Heart left ventricle (tissue), 16 donors: ENCODE measurements at regions of chr19 and their contacts with region 1.

Region 1: DNA sequence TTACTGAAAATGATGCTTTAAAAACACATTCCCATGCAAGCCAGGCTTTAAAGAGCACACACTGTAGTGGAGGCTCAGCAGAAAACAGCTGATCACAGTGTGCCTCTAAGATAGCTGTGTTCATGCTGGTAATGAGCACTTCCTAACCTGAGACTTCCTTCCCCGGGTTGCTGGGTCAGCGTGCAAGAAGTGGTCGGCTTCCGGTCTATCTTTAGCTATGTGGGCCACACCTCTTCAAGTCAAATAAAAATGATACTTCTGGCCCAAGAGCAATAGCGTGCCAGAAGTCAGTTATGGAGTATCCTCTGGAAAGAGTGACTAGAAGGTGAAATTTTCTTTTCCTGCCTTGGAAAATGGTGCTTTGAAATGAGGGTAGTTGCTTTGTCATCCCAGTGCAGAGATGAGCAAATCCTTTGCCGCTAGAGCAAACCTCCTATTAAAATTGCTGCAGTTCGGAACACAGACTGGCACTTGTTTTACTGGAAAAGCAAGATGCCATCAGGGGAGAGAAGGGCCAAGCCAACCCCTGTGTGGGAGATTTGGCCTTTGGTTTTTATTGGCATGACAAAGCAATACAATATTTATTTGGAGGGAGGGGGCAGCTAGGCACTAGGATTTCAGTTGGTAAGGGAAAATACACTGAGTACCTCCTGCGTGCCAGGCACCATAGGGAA is 64.2 kb downstream of the ARHGAP35 start:
- DNase-seq: peak in 3 of 5 donors; percentile 24 to 43 (median 42)
- ATAC-seq: peak in 3 of 4 donors; percentile 49 to 85 (median 73)
- H3K4me3 ChIP-seq: no peak overlapping the region
- H3K27ac ChIP-seq: peak overlapping the region in 11 of 12 donors; percentile 11 to 72 (median 56)
- H3K4me1 ChIP-seq: peaks cover 16 to 66% (median 53%) of the 10 kb centered on the region in 12 donors
- H3K27me3 ChIP-seq: no peaks in the 10 kb centered on the region
- CTCF ChIP-seq: no peak
- POLR2A ChIP-seq: no peak

Region 2: GRCh38 chr19:46661020-46661731 is 263.8 kb before region 1 on chr19 and contains the start of gene DACT3:
- intact Hi-C with region 1: no loop called
- DNase-seq: peak; percentile 100
- ATAC-seq: peak; percentile 96 to 97 (median 96)
- H3K4me3 ChIP-seq: peak within 1 kb of the TSS; percentile 46 to 79 (median 70)
- H3K27ac ChIP-seq: peak within 1 kb of the TSS; percentile 5 to 94 (median 72)
- H3K4me1 ChIP-seq: peaks cover 0 to 32% (median 21%) of the 10 kb centered on the region in 12 donors
- H3K27me3 ChIP-seq: peaks cover 0 to 24% (median 0%) of the 10 kb centered on the region in 9 donors
- CTCF ChIP-seq: peak in 3 of 12 donors; percentile 10 to 34 (median 16)
- POLR2A ChIP-seq: peak in 1 of 2 donors; percentile 25
- total RNA-seq, gene DACT3: 8.8 to 23.4 (median 15.1) TPM

Region 3: GRCh38 chr19:46904114-46905060 is 20.6 kb before region 1 on chr19:
- intact Hi-C with region 1: no loop called
- DNase-seq: peak in 4 of 5 donors; percentile 45 to 75 (median 59)
- ATAC-seq: peak in 3 of 4 donors; percentile 65 to 71 (median 66)
- H3K4me3 ChIP-seq: no peak overlapping the region
- H3K27ac ChIP-seq: peak overlapping the region in 11 of 12 donors; percentile 31 to 66 (median 48)
- H3K4me1 ChIP-seq: peaks cover 9 to 81% (median 53%) of the 10 kb centered on the region in 12 donors
- H3K27me3 ChIP-seq: no peaks in the 10 kb centered on the region
- CTCF ChIP-seq: no peak
- POLR2A ChIP-seq: no peak

Region 4: DNA sequence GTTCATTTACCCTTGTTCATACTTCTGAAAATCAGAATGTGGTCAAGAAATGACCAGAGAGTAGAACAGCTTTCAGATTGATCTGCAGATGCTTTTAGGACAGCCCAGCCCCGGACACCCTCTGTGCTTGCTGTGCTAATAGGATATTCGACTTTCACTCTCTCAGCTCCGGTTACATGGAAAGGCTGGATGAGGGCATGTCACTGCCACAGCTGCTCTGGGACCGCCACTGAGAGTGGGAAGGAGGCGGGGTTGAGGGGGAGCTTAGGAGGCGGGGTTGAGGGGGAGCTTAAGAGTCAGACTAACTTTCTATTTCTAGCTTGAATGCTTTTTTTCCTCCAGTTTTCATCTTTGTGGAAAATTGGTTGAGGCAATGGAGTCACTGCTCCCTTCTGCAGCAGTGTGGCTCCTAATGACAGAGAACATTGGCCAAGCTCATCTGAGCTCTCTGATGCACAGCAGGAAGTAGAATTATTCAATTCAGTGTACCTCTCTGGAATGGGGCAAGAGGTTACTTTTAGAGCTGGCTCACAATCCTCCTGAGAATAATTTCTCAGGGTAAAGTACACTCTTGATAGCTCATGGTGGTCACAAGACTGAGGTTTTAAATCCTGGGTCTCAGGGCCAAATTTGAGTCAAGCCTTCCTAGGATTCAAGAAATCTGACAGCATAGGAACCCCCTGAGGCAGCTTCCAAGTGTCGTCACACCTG is 20.1 kb after region 1 on chr19:
- intact Hi-C with region 1: loop called in 1 of 10 experiments (anchors 1 kb)
- DNase-seq: peak; percentile 75 to 86 (median 80)
- ATAC-seq: peak; percentile 88 to 95 (median 94)
- H3K4me3 ChIP-seq: peak overlapping the region in 7 of 12 donors; percentile 2 to 33 (median 25)
- H3K27ac ChIP-seq: peak overlapping the region; percentile 53 to 83 (median 72)
- H3K4me1 ChIP-seq: peaks cover 16 to 65% (median 47%) of the 10 kb centered on the region in 12 donors
- H3K27me3 ChIP-seq: no peaks in the 10 kb centered on the region
- CTCF ChIP-seq: no peak
- POLR2A ChIP-seq: no peak

Region 5: DNA sequence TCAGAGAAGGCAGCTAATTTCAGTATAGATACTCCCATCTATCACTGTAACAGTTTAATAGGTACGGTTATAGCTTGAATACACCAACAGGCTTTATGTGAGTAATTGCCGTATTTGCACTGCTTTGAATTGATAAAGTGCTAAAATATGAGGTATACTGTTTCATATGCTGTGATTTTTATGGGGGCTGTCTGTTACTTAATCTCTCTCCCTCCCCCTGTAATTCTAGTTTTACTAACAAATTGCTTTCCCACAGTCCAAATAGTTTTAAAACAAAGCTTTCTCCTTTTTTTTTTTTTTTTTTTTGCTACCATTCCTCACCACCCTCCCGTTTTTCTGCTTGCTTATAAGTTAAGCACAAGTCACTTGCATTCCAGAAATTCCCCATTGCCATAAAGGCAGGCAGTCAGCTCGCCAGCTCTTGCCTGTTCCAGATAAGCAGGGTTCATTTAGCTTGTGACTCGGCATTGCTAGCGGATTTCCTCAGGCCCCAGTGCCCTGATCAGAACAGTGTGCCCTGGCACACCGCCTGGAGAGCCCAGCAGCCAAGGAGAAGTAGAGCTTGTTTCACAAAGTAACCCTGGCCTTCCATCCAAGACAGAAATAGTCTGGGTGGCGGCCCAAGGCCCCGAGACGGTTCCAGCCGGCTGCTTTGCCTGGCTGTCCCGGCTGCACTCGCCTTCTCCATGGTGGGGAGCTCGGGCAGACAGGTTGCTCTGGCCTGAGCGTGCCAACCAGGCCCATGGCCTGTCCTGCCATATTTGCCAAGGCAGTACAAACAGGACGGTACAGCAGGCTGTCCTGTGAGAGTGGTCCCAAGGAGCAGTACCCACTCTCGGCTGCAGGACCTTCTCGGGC is 51.1 kb after region 1 on chr19:
- intact Hi-C with region 1: loop called in 3 of 10 experiments (anchors 5 to 10 kb)
- DNase-seq: peak; percentile 91 to 97 (median 95)
- ATAC-seq: peak; percentile 88 to 93 (median 91)
- H3K4me3 ChIP-seq: peak overlapping the region in 2 of 12 donors; percentile 0 to 19
- H3K27ac ChIP-seq: peak overlapping the region; percentile 80 to 95 (median 90)
- H3K4me1 ChIP-seq: peaks cover 22 to 92% (median 71%) of the 10 kb centered on the region in 12 donors
- H3K27me3 ChIP-seq: no peaks in the 10 kb centered on the region
- CTCF ChIP-seq: no peak
- POLR2A ChIP-seq: peak in 1 of 2 donors; percentile 14

Region 6: DNA sequence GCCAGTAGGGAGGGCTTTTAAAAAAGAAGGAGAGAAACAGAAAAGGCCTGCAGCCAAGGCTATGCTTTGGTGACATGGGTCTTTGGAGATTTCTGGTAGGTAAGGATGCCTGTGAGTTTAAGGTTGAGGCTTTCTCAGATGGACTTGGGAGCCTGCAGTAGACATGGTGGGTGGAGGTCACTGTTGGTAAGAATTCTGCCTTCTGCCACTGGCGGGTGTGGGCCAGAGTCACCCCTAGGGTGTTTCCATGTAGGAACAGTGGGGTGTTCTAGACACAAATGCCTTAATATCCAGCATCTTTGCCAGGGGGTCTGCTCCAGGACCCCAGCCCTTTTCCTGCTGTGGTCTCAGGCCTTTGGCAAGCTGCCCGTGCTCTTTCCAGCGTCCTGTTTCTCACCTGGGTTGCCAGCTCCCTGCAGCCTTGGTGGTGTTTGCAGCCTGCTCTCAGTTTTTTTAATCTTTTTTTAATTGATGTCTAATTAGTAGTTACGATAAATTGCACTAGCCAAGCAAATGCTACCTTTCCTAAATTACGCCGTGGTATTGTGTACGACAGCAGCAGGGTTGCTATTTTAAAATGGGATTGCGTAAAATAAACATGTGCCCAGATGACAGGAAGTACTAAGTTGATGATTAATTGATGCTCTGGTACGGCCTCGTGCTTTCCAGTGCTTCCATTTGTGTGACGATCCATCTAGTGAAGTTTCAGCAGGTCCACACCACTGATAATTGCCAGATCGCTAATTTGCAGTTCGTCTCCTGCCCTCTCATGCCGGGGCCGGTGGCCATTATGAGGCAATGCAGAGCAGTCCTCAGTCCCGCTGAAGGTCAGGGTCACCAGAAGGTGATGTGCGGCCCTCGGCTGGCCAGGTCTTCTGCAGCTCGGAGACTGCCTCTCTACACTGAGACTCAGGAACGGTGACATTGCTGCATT is 59.3 kb after region 1 on chr19:
- intact Hi-C with region 1: loop called in 4 of 10 experiments (anchors 5 to 10 kb)
- DNase-seq: peak in 2 of 5 donors; percentile 73 to 83
- ATAC-seq: peak; percentile 60 to 86 (median 76)
- H3K4me3 ChIP-seq: no peak overlapping the region
- H3K27ac ChIP-seq: peak overlapping the region; percentile 48 to 85 (median 82)
- H3K4me1 ChIP-seq: peaks cover 0 to 86% (median 57%) of the 10 kb centered on the region in 12 donors
- H3K27me3 ChIP-seq: no peaks in the 10 kb centered on the region
- CTCF ChIP-seq: no peak
- POLR2A ChIP-seq: no peak